Naive thymus-derived CD4-positive, alpha-beta T cell (primary cell): ENCODE measurements at regions of chr5 and their contacts with region 1.

Region 1: DNA sequence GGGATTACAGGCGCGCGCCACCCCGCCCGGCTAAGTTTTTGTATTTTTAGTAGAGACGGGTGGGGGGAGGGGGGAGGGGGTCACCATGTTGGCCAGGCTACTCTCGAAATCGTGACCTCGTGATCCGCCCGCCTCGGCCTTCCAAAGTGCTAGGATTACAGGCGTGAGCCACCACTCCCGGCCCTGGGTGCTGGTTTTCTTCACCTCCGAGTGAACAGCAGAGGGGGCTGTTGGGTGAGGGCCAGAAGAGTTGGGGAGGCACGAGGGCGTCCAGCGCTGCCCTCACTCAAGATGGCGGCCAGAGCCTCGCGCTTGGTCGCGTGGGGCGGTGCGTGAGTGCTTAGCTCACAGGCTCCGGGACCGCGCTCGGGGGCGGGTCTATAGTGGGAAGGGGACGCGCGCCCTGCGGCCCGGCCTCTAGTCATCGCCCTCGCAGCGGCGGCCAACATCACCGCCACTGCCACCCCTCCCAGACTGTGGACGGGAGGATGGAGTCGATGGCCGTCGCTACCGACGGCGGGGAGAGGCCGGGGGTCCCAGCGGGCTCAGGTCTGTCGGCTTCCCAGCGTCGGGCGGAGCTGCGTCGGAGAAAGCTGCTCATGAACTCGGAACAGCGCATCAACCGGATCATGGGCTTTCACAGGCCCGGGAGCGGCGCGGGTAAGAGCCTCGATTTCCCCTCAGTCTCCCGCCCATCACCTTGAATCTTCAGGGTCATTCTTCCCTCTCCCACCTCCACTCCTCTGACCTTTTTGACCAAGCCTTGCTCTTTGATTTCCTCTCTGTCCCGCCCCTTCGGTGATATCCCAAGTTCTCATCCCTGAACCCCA is at the start of gene CAMLG:
- DNase-seq: peak; percentile 93 to 96 (median 96)
- ATAC-seq: peak; percentile 98
- H3K4me3 ChIP-seq: peak within 1 kb of the TSS; percentile 91
- H3K4me3 Mint-ChIP-seq: peak within 1 kb of the TSS; percentile 88 to 100 (median 96)
- H3K27ac ChIP-seq: peak within 1 kb of the TSS; percentile 93
- H3K27ac Mint-ChIP-seq: peak within 1 kb of the TSS; percentile 90 to 98 (median 93)
- H3K4me1 ChIP-seq: peaks cover 8 to 10% of the 10 kb centered on the region in 2 donors
- H3K4me1 Mint-ChIP-seq: peaks cover 9 to 34% (median 29%) of the 10 kb centered on the region in 7 donors
- H3K27me3 ChIP-seq: no peaks in the 10 kb centered on the region
- H3K27me3 Mint-ChIP-seq: no peaks in the 10 kb centered on the region
- total RNA-seq, gene CAMLG: 20.4 to 38.1 (median 31.8) TPM

Region 2: GRCh38 chr5:134236820-134237219 is 501.5 kb before region 1 on chr5:
- CTCF ChIA-PET with region 1: no interaction called
- POLR2A ChIA-PET with region 1: interaction called, 11 read pairs
- intact Hi-C with region 1: no loop called
- DNase-seq: no peak
- ATAC-seq: no peak
- H3K4me3 ChIP-seq: no peak overlapping the region
- H3K4me3 Mint-ChIP-seq: no peak overlapping the region
- H3K27ac ChIP-seq: no peak overlapping the region
- H3K27ac Mint-ChIP-seq: no peak overlapping the region
- H3K4me1 ChIP-seq: no peaks in the 10 kb centered on the region
- H3K4me1 Mint-ChIP-seq: no peaks in the 10 kb centered on the region
- H3K27me3 ChIP-seq: no peaks in the 10 kb centered on the region
- H3K27me3 Mint-ChIP-seq: peaks cover 0 to 39% (median 3%) of the 10 kb centered on the region in 5 donors

Region 3: DNA sequence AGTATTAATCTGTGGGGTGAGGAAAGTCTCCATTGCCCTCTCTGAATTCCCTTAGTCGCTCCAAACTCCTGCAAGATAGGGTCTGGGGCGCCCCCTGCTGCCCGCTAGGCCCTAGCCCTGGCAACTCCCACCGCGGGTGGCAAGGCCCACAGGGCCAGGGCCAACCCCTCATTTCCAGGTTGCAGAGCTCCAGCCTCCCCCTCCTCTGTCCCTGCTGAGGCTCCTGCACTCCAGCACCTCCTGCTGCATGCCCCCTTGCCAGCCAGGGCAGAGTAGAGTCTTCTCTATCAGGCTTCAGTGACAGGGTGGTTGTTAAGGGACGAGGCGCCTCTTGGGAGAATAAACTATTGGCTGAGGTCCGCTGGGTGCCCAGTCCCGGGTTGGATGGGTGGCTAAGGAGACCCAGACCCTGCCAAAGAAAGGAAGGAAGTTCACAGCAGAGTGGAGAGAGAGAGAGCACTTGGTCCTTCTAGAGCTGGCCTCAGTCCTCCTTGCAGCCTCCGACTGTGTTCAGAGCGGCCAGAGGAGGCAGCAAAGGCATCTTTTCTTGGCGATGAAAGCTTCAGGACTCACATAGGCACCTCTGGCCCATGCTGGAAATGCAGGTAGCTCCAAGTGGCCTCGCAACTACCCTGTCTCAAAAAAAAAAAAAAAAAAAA is 151.4 kb before region 1 on chr5:
- CTCF ChIA-PET with region 1: no interaction called
- POLR2A ChIA-PET with region 1: no interaction called
- intact Hi-C with region 1: loop called in 1 of 2 experiments (anchors 5 kb)
- DNase-seq: peak; percentile 56 to 88 (median 76)
- ATAC-seq: peak; percentile 93
- H3K4me3 ChIP-seq: peak overlapping the region; percentile 11
- H3K4me3 Mint-ChIP-seq: peak overlapping the region in 8 of 10 donors; percentile 9 to 63 (median 25)
- H3K27ac ChIP-seq: no peak overlapping the region
- H3K27ac Mint-ChIP-seq: peak overlapping the region; percentile 22 to 84 (median 54)
- H3K4me1 ChIP-seq: peaks cover 4% of the 10 kb centered on the region in 2 donors
- H3K4me1 Mint-ChIP-seq: peaks cover 0 to 17% (median 9%) of the 10 kb centered on the region in 7 donors
- H3K27me3 ChIP-seq: no peaks in the 10 kb centered on the region
- H3K27me3 Mint-ChIP-seq: no peaks in the 10 kb centered on the region

Region 4: GRCh38 chr5:134648425-134649162 is 89.8 kb before region 1 on chr5 and contains the start of gene SEC24A:
- CTCF ChIA-PET with region 1: no interaction called
- POLR2A ChIA-PET with region 1: no interaction called
- intact Hi-C with region 1: loop called (anchors 1 kb)
- DNase-seq: peak; percentile 83 to 93 (median 86)
- ATAC-seq: peak; percentile 92
- H3K4me3 ChIP-seq: peak within 1 kb of the TSS; percentile 76
- H3K4me3 Mint-ChIP-seq: peak within 1 kb of the TSS; percentile 89 to 100 (median 98)
- H3K27ac ChIP-seq: peak within 1 kb of the TSS; percentile 91
- H3K27ac Mint-ChIP-seq: peak within 1 kb of the TSS; percentile 94 to 100 (median 99)
- H3K4me1 ChIP-seq: peaks cover 7 to 9% of the 10 kb centered on the region in 2 donors
- H3K4me1 Mint-ChIP-seq: peaks cover 13 to 40% (median 26%) of the 10 kb centered on the region in 7 donors
- H3K27me3 ChIP-seq: no peaks in the 10 kb centered on the region
- H3K27me3 Mint-ChIP-seq: no peaks in the 10 kb centered on the region
- total RNA-seq, gene SEC24A: 13.6 to 30.9 (median 16.0) TPM

Region 5: DNA sequence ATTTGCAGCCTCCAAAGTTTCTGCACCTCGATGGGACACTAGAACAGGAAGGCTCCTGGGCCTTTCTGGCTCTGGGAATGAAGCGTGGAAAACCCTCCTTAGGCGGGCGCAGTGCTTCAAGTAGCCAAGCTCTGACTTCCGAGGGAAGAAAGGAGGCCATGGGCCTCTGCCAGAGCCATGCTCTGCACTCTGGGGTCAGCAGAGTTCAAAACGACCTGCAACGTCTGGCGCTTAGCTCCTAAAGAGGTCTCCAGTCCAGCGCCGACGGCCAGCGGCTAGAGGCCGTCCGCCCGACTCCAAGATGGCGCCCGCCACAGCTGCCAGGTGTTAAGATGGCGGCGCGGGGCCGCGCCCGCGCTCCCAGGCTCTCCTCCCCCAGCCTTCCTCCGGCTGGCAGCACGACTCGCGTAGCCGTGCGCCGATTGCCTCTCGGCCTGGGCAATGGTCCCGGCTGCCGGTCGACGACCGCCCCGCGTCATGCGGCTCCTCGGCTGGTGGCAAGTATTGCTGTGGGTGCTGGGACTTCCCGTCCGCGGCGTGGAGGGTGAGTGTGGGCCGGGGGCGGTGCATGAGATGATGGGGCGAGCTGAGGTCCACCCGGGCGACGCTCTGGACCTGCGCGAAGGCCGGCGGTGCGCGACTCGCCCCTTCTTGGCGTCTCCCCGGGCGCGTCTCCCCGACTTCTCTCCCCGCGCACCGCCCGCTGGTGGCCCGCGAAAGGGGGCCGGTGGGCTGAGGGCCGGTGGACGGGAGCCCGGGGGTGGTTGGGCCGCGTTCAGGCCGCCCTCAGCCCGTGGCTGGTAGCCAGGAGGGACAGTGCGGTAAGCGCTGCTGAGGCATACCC is 135.9 kb after region 1 on chr5 and contains the start of gene TXNDC15:
- CTCF ChIA-PET with region 1: no interaction called
- POLR2A ChIA-PET with region 1: interaction called, 3 read pairs
- intact Hi-C with region 1: loop called (anchors 1 kb)
- DNase-seq: peak; percentile 69 to 86 (median 78)
- ATAC-seq: peak; percentile 98
- H3K4me3 ChIP-seq: peak within 1 kb of the TSS; percentile 95
- H3K4me3 Mint-ChIP-seq: peak within 1 kb of the TSS; percentile 89 to 98 (median 94)
- H3K27ac ChIP-seq: peak within 1 kb of the TSS; percentile 88
- H3K27ac Mint-ChIP-seq: peak within 1 kb of the TSS; percentile 91 to 97 (median 95)
- H3K4me1 ChIP-seq: peaks cover 16 to 32% of the 10 kb centered on the region in 2 donors
- H3K4me1 Mint-ChIP-seq: peaks cover 31 to 51% (median 45%) of the 10 kb centered on the region in 7 donors
- H3K27me3 ChIP-seq: no peaks in the 10 kb centered on the region
- H3K27me3 Mint-ChIP-seq: no peaks in the 10 kb centered on the region
- total RNA-seq, gene TXNDC15: 24.2 to 71.3 (median 36.8) TPM

Region 6: DNA sequence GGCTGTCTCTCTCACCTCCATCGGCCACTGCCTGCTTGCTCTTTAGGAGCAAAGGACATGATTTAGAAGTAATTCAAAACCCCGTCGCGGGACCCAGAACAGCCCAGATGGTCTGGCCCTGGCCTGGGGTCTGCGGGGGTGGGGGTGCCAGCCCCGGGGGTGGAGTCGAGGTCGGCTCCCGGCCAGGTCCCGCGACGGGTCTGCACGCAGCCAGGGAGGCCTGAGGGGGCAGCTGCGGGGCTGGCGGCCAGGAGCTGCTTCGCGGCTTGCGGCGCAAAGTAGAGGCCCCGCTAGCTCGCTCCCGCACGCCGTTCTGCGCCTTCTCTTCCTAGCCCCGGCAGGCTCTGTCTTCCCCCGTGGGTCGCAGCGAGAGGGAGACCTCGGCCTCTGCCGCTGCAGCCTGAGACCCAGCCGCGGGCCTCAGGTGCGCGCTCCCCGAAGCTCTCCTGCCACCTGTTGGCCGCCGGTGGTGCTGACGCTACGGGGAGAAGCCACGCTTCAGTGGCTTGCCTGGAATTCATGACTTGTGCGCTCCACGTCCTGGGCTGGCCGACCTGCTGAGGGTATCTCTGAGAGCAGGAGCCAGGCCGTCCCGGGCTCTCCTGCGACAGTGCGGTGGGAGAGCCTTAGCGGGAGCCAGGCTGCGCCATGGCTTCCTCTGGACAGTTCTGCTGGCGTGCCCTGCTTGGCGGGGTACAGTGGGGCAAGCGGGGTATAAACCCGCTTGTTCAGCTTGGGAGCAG is 452.9 kb after region 1 on chr5:
- CTCF ChIA-PET with region 1: no interaction called
- POLR2A ChIA-PET with region 1: no interaction called
- intact Hi-C with region 1: loop called in 1 of 2 experiments (anchors 1 kb)
- DNase-seq: peak; percentile 44 to 77 (median 68)
- ATAC-seq: peak; percentile 95
- H3K4me3 ChIP-seq: peak overlapping the region; percentile 44
- H3K4me3 Mint-ChIP-seq: peak overlapping the region; percentile 75 to 89 (median 80)
- H3K27ac ChIP-seq: no peak overlapping the region
- H3K27ac Mint-ChIP-seq: no peak overlapping the region
- H3K4me1 ChIP-seq: peaks cover 0 to 7% of the 10 kb centered on the region in 2 donors
- H3K4me1 Mint-ChIP-seq: peaks cover 0 to 8% (median 2%) of the 10 kb centered on the region in 7 donors
- H3K27me3 ChIP-seq: no peaks in the 10 kb centered on the region
- H3K27me3 Mint-ChIP-seq: peaks cover 19 to 76% (median 25%) of the 10 kb centered on the region in 5 donors